Common myeloid progenitor, CD34-positive (primary cell): ENCODE measurements at regions of chr11 and their contacts with region 1.

Region 1: DNA sequence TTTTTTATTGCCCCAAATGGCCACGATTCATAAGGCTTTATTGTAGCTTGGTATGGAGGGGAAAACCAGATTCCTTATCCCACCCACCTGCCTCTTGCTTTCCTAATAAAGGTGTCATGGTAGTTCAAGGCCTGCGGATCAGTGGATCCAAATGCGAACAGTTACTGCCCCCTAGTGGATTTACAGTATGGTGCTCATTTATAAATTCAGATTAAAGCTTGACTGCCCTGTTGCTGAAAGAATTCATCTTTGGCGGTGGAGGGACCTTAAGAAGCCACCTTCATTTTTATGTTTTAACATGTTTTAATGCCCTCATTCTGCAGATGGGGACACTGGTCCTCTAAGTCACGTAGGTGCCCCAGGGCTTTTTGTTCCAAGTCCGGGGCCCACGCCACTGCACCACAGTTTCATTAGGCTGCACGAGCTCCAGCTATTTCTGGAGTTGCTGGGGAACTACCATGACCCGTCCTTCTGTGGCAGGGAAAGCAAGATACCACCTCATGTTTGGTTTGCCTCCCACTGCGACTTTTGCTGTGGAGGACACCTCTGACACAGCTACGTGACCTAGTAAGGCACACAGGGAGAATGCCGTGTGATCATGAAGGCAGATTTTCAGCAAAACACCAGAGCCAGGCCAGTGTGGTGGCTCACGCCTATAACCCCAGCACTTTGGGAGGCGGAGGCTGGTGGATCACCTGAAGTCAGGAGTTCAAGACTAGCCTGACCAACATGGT is 15.6 kb upstream of the INCENP start:
- DNase-seq: peak; percentile 72 to 86 (median 78)
- H3K4me3 ChIP-seq: no peak overlapping the region
- H3K27ac ChIP-seq: no peak overlapping the region
- H3K4me1 ChIP-seq: peaks cover 0 to 21% (median 12%) of the 10 kb centered on the region in 4 experiments
- H3K27me3 ChIP-seq: peaks cover 0 to 4% (median 0%) of the 10 kb centered on the region in 5 experiments

Region 2: GRCh38 chr11:61747192-61747966 is 360.8 kb before region 1 on chr11:
- CTCF ChIA-PET with region 1: interaction called, 10 read pairs
- POLR2A ChIA-PET with region 1: no interaction called
- DNase-seq: peak in 2 of 3 donors; percentile 37 to 43
- H3K4me3 ChIP-seq: no peak overlapping the region
- H3K27ac ChIP-seq: no peak overlapping the region
- H3K4me1 ChIP-seq: peaks cover 0 to 4% (median 3%) of the 10 kb centered on the region in 4 experiments
- H3K27me3 ChIP-seq: peaks cover 0 to 12% (median 2%) of the 10 kb centered on the region in 5 experiments

Region 3: GRCh38 chr11:61883327-61883726 is 224.9 kb before region 1 on chr11:
- CTCF ChIA-PET with region 1: interaction called, 10 read pairs
- POLR2A ChIA-PET with region 1: no interaction called
- DNase-seq: no peak
- H3K4me3 ChIP-seq: no peak overlapping the region
- H3K27ac ChIP-seq: no peak overlapping the region
- H3K4me1 ChIP-seq: no peaks in the 10 kb centered on the region
- H3K27me3 ChIP-seq: no peaks in the 10 kb centered on the region

Region 4: GRCh38 chr11:61899146-61899841 is 208.9 kb before region 1 on chr11:
- CTCF ChIA-PET with region 1: interaction called, 201 read pairs
- POLR2A ChIA-PET with region 1: interaction called, 3 read pairs
- DNase-seq: peak; percentile 87 to 94 (median 92)
- H3K4me3 ChIP-seq: no peak overlapping the region
- H3K27ac ChIP-seq: no peak overlapping the region
- H3K4me1 ChIP-seq: peaks cover 0 to 7% (median 2%) of the 10 kb centered on the region in 4 experiments
- H3K27me3 ChIP-seq: peaks cover 0 to 2% (median 0%) of the 10 kb centered on the region in 5 experiments

Region 5: DNA sequence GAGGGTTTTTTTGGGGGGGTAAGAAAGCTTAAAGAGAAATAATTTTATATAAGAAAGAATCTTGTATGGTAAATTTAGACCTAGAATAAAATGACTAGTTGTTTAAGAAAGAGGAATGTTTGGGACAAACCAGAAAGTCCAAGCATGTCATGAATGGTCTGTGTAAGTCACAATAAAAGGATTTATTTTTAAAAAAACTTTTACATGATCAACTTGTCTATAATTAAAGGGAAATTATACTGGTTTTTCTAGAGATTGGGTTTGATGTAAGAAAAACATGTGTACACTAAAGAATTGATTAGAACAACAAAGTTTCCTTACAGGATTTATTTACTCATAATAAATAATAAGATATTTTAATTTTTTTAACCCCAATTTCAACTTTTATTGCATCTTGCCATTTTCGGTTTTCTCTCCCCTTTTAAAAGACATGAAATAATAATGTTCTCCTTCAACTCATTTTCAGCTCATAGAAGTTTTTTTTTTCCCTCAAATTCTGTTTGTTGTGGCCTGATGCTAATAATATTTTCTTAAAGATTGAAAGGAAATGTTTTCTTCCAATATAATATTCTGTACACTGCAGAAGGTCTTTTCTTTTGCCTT is 19.8 kb before region 1 on chr11:
- CTCF ChIA-PET with region 1: interaction called, 12 read pairs
- POLR2A ChIA-PET with region 1: interaction called, 6 read pairs
- DNase-seq: no peak
- H3K4me3 ChIP-seq: no peak overlapping the region
- H3K27ac ChIP-seq: no peak overlapping the region
- H3K4me1 ChIP-seq: no peaks in the 10 kb centered on the region
- H3K27me3 ChIP-seq: no peaks in the 10 kb centered on the region